GM10248 (cell line): ENCODE measurements at regions of chr19 and their contacts with region 1.

Region 1: GRCh38 chr19:38134540-38135149 is 89.4 kb downstream of the DPF1 start:
- DNase-seq: peak; percentile 54
- CTCF ChIP-seq: peak; percentile 41

Region 2: DNA sequence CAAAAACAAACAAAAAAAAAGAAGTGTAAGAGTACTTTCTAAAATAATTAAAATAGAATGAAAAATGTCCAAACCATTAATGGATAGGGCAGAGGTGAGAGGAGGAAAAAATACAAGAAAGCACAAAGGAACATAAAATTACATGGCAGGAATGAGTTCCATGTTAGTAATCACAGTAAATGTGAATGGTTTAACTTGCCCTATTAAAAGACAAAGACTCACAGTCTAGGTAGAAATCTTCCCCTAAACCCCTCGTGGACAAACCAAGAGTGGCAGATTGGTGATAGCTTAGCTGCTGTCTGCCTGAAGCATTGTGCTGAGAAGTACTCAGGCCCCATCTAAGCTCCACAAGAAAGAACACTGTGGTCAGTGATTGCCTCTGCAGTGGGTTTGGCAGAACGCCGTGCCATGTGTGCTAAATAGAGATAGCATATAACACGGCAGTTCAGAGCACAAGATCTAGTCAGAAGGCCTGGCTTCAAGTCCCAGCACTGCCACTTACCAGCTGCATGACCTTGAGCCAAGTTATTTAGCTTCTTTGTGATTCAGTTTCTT is 14.1 kb before region 1 on chr19:
- CTCF ChIA-PET with region 1: interaction called, 10 read pairs
- POLR2A ChIA-PET with region 1: no interaction called
- DNase-seq: no peak
- CTCF ChIP-seq: no peak

Region 3: GRCh38 chr19:38162094-38162493 is 27.4 kb after region 1 on chr19:
- CTCF ChIA-PET with region 1: no interaction called
- POLR2A ChIA-PET with region 1: no interaction called
- DNase-seq: no peak
- CTCF ChIP-seq: no peak